Naive thymus-derived CD4-positive, alpha-beta T cell (primary cell): ENCODE measurements at regions of chr3 and their contacts with region 1.

Region 1: DNA sequence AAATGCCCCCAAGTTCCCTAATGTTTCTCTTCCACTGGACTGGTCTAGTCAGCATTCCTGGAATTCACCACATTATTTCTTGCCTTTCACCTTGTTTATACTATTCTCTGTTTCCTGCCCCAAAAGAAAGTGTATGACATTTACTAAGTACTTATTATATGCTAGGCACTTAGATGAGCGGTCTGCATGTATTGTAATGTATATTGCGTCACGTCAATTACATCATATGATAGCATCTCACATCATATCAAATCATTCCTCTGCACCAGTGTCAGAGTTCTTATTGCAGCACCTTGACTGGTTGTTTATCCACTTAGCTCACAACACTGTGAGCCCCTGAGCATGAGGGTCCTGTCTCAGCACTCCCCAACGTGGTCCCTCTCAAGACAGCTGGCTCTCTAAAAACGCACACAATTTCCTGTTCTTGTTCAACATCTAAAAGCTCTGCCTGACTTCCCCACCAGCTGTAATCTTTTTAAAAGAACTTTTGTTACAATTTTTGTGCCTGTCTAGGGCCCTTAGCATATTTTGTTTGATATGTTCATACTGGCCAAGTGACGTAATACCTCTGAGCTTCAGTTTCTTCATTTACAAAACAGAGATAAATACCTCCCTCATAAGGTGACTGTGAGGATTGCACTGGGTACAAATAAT is 58.8 kb downstream of the ARHGAP31 start:
- DNase-seq: peak in 7 of 9 donors; percentile 53 to 78 (median 69)
- ATAC-seq: peak; percentile 77
- H3K4me3 ChIP-seq: no peak overlapping the region
- H3K4me3 Mint-ChIP-seq: peak overlapping the region in 8 of 10 donors; percentile 2 to 67 (median 54)
- H3K27ac ChIP-seq: no peak overlapping the region
- H3K27ac Mint-ChIP-seq: peak overlapping the region in 8 of 9 donors; percentile 13 to 81 (median 42)
- H3K4me1 ChIP-seq: peaks cover 0 to 35% of the 10 kb centered on the region in 2 donors
- H3K4me1 Mint-ChIP-seq: peaks cover 26 to 47% (median 36%) of the 10 kb centered on the region in 7 donors
- H3K27me3 ChIP-seq: no peaks in the 10 kb centered on the region
- H3K27me3 Mint-ChIP-seq: peaks cover 0 to 20% (median 0%) of the 10 kb centered on the region in 5 donors

Region 2: GRCh38 chr3:119034256-119035013 is 318.5 kb before region 1 on chr3 and contains the start of gene IGSF11:
- CTCF ChIA-PET with region 1: interaction called, 6 read pairs
- POLR2A ChIA-PET with region 1: no interaction called
- intact Hi-C with region 1: loop called in 1 of 2 experiments (anchors 1 kb)
- DNase-seq: peak; percentile 52 to 79 (median 68)
- ATAC-seq: peak; percentile 93
- H3K4me3 ChIP-seq: peak within 1 kb of the TSS; percentile 62
- H3K4me3 Mint-ChIP-seq: peak within 1 kb of the TSS; percentile 83 to 93 (median 90)
- H3K27ac ChIP-seq: no peak within 1 kb of the TSS
- H3K27ac Mint-ChIP-seq: peak within 1 kb of the TSS in 3 of 9 donors; percentile 46 to 81 (median 58)
- H3K4me1 ChIP-seq: no peaks in the 10 kb centered on the region
- H3K4me1 Mint-ChIP-seq: peaks cover 0 to 17% (median 10%) of the 10 kb centered on the region in 7 donors
- H3K27me3 ChIP-seq: peaks cover 5 to 7% of the 10 kb centered on the region in 2 donors
- H3K27me3 Mint-ChIP-seq: peaks cover 34 to 64% (median 48%) of the 10 kb centered on the region in 5 donors
- total RNA-seq, gene IGSF11: 0.15 to 0.85 (median 0.49) TPM in 4 of 5 experiments, not detected in the other

Region 3: GRCh38 chr3:119145500-119146191 is 207.3 kb before region 1 on chr3 and contains the start of gene TEX55:
- CTCF ChIA-PET with region 1: interaction called, 8 read pairs
- POLR2A ChIA-PET with region 1: no interaction called
- intact Hi-C with region 1: loop called (anchors 1 kb)
- DNase-seq: peak in 7 of 9 donors; percentile 19 to 48 (median 34)
- ATAC-seq: peak; percentile 57
- H3K4me3 ChIP-seq: no peak within 1 kb of the TSS
- H3K4me3 Mint-ChIP-seq: no peak within 1 kb of the TSS
- H3K27ac ChIP-seq: no peak within 1 kb of the TSS
- H3K27ac Mint-ChIP-seq: peak within 1 kb of the TSS in 2 of 9 donors; percentile 9 to 12
- H3K4me1 ChIP-seq: no peaks in the 10 kb centered on the region
- H3K4me1 Mint-ChIP-seq: peaks cover 0 to 8% (median 5%) of the 10 kb centered on the region in 7 donors
- H3K27me3 ChIP-seq: no peaks in the 10 kb centered on the region
- H3K27me3 Mint-ChIP-seq: no peaks in the 10 kb centered on the region
- total RNA-seq, gene TEX55: not detected

Region 4: GRCh38 chr3:119293871-119294695 is 58.9 kb before region 1 on chr3 and contains the start of gene ARHGAP31:
- CTCF ChIA-PET with region 1: interaction called, 16 read pairs
- POLR2A ChIA-PET with region 1: interaction called, 19 read pairs
- intact Hi-C with region 1: loop called in 1 of 2 experiments (anchors 1 kb)
- DNase-seq: peak; percentile 70 to 91 (median 86)
- ATAC-seq: peak; percentile 77
- H3K4me3 ChIP-seq: peak within 1 kb of the TSS; percentile 50
- H3K4me3 Mint-ChIP-seq: peak within 1 kb of the TSS; percentile 68 to 95 (median 90)
- H3K27ac ChIP-seq: peak within 1 kb of the TSS; percentile 91
- H3K27ac Mint-ChIP-seq: peak within 1 kb of the TSS; percentile 71 to 99 (median 92)
- H3K4me1 ChIP-seq: peaks cover 22 to 26% of the 10 kb centered on the region in 2 donors
- H3K4me1 Mint-ChIP-seq: peaks cover 26 to 74% (median 63%) of the 10 kb centered on the region in 7 donors
- H3K27me3 ChIP-seq: no peaks in the 10 kb centered on the region
- H3K27me3 Mint-ChIP-seq: peaks cover 0 to 43% (median 0%) of the 10 kb centered on the region in 5 donors
- total RNA-seq, gene ARHGAP31: 3.0 to 11.9 (median 3.1) TPM

Region 5: GRCh38 chr3:119342176-119342575 is 10.8 kb before region 1 on chr3:
- CTCF ChIA-PET with region 1: interaction called, 5 read pairs
- POLR2A ChIA-PET with region 1: interaction called, 4 read pairs
- intact Hi-C with region 1: loop called in 1 of 2 experiments (anchors 1 kb)
- DNase-seq: no peak
- ATAC-seq: no peak
- H3K4me3 ChIP-seq: no peak overlapping the region
- H3K4me3 Mint-ChIP-seq: no peak overlapping the region
- H3K27ac ChIP-seq: no peak overlapping the region
- H3K27ac Mint-ChIP-seq: peak overlapping the region in 1 of 9 donors; percentile 46
- H3K4me1 ChIP-seq: no peaks in the 10 kb centered on the region
- H3K4me1 Mint-ChIP-seq: peaks cover 0 to 9% (median 4%) of the 10 kb centered on the region in 7 donors
- H3K27me3 ChIP-seq: no peaks in the 10 kb centered on the region
- H3K27me3 Mint-ChIP-seq: peaks cover 0 to 4% (median 0%) of the 10 kb centered on the region in 5 donors